Activated CD4-positive, alpha-beta T cell treated with anti-CD3 and anti-CD28 coated beads for 36 hours (primary cell): ENCODE measurements at regions of chr5 and their contacts with region 1.

Region 1: GRCh38 chr5:168137265-168137664 is 154.2 kb upstream of the WWC1 start:
- DNase-seq: no peak
- ATAC-seq: no peak
- H3K4me3 Mint-ChIP-seq: no peak overlapping the region
- H3K27ac Mint-ChIP-seq: no peak overlapping the region
- H3K4me1 Mint-ChIP-seq: peaks cover 4% of the 10 kb centered on the region
- H3K27me3 Mint-ChIP-seq: peaks cover 14% of the 10 kb centered on the region

Region 2: GRCh38 chr5:168086104-168086610 is 51.1 kb before region 1 on chr5:
- CTCF ChIA-PET with region 1: no interaction called
- POLR2A ChIA-PET with region 1: no interaction called
- intact Hi-C with region 1: no loop called
- DNase-seq: no peak
- ATAC-seq: no peak
- H3K4me3 Mint-ChIP-seq: no peak overlapping the region
- H3K27ac Mint-ChIP-seq: no peak overlapping the region
- H3K4me1 Mint-ChIP-seq: no peaks in the 10 kb centered on the region
- H3K27me3 Mint-ChIP-seq: peaks cover 4% of the 10 kb centered on the region

Region 3: GRCh38 chr5:168147568-168148360 is 10.5 kb after region 1 on chr5:
- CTCF ChIA-PET with region 1: no interaction called
- POLR2A ChIA-PET with region 1: no interaction called
- intact Hi-C with region 1: no loop called
- DNase-seq: no peak
- ATAC-seq: no peak
- H3K4me3 Mint-ChIP-seq: no peak overlapping the region
- H3K27ac Mint-ChIP-seq: no peak overlapping the region
- H3K4me1 Mint-ChIP-seq: no peaks in the 10 kb centered on the region
- H3K27me3 Mint-ChIP-seq: peaks cover 4% of the 10 kb centered on the region

Region 4: GRCh38 chr5:168941901-168942300 is 804.6 kb after region 1 on chr5:
- CTCF ChIA-PET with region 1: no interaction called
- POLR2A ChIA-PET with region 1: interaction called, 10 read pairs
- intact Hi-C with region 1: no loop called
- DNase-seq: no peak
- ATAC-seq: no peak
- H3K4me3 Mint-ChIP-seq: no peak overlapping the region
- H3K27ac Mint-ChIP-seq: no peak overlapping the region
- H3K4me1 Mint-ChIP-seq: peaks cover under 1% of the 10 kb centered on the region
- H3K27me3 Mint-ChIP-seq: no peaks in the 10 kb centered on the region